Activated CD4-positive, alpha-beta T cell treated with anti-CD3 and anti-CD28 coated beads for 36 hours (primary cell): ENCODE measurements at regions of chr1 and their contacts with region 1.

Region 1: DNA sequence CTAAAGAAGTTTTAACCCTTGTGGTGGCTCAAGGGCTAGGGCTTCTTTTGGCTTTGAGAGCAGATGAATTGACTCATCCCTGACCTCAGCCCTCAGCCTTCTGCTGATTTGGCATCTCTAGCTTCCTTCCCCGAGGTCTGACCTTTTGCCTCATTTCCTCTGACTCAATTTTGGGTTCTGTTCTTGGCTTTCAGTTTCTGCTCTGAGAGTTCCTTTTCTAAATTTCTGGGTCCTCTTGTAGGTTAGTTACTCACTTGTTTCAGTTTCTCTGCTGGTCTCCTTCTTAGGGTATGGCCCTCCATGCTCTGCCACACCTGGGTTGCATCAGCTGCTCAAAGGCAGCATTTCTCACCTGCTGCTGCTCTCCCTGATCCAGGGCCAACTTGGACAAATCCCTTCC is 19.4 kb downstream of the PDE4B start:
- DNase-seq: peak; percentile 81
- ATAC-seq: peak; percentile 98
- H3K4me3 Mint-ChIP-seq: peak overlapping the region; percentile 11
- H3K27ac Mint-ChIP-seq: peak overlapping the region; percentile 74
- H3K4me1 Mint-ChIP-seq: peaks cover 24% of the 10 kb centered on the region
- H3K27me3 Mint-ChIP-seq: peaks cover 36% of the 10 kb centered on the region

Region 2: DNA sequence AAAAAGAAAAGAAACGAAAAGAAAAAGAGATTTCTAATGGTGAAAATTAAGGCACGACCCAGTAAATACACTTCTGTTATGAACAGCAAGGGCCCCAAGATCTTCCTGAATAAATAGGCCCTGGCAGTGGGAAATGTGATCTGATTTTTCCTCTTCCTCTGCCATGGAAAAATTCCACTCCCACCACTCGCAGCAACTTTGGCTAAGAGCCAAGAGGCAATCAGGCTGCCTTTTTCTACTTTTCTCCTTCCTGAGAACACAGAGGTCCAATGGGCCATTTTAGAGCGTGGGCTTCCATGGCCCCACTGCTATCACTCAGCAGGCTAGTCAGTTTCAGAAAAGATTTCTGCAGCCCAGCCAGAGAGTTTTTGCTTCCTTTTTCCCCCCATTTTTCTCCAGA is 697.7 kb before region 1 on chr1:
- CTCF ChIA-PET with region 1: no interaction called
- POLR2A ChIA-PET with region 1: no interaction called
- intact Hi-C with region 1: no loop called
- DNase-seq: no peak
- ATAC-seq: no peak
- H3K4me3 Mint-ChIP-seq: no peak overlapping the region
- H3K27ac Mint-ChIP-seq: no peak overlapping the region
- H3K4me1 Mint-ChIP-seq: no peaks in the 10 kb centered on the region
- H3K27me3 Mint-ChIP-seq: peaks cover 3% of the 10 kb centered on the region

Region 3: GRCh38 chr1:65148548-65149350 is 663.3 kb before region 1 on chr1:
- CTCF ChIA-PET with region 1: no interaction called
- POLR2A ChIA-PET with region 1: no interaction called
- intact Hi-C with region 1: loop called in 1 of 2 experiments (anchors 5 kb)
- DNase-seq: peak; percentile 88
- ATAC-seq: peak; percentile 78
- H3K4me3 Mint-ChIP-seq: peak overlapping the region; percentile 85
- H3K27ac Mint-ChIP-seq: peak overlapping the region; percentile 82
- H3K4me1 Mint-ChIP-seq: peaks cover 15% of the 10 kb centered on the region
- H3K27me3 Mint-ChIP-seq: peaks cover 43% of the 10 kb centered on the region

Region 4: DNA sequence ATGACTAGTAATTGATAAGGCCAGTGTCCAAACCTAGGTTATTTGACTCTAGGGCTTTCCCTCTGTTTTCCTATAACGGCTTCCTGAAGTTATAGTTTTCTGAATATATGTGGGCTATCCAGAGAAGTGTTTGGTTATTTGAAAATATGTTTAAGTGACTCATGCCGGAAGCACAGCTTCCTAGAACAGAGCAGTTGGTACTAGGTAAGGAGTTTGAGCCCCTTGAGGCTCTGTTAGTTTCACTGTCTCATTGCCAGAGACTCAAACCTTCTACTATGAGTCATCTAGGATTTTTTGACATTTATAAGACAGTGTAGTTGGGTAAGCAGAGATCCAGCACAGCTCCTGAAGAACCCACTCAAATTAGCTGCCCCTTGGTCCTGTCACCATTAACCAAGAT is 418.7 kb before region 1 on chr1:
- CTCF ChIA-PET with region 1: no interaction called
- POLR2A ChIA-PET with region 1: no interaction called
- intact Hi-C with region 1: loop called (anchors 2 to 5 kb)
- DNase-seq: peak; percentile 45
- ATAC-seq: peak; percentile 87
- H3K4me3 Mint-ChIP-seq: no peak overlapping the region
- H3K27ac Mint-ChIP-seq: peak overlapping the region; percentile 28
- H3K4me1 Mint-ChIP-seq: peaks cover 57% of the 10 kb centered on the region
- H3K27me3 Mint-ChIP-seq: no peaks in the 10 kb centered on the region

Region 5: DNA sequence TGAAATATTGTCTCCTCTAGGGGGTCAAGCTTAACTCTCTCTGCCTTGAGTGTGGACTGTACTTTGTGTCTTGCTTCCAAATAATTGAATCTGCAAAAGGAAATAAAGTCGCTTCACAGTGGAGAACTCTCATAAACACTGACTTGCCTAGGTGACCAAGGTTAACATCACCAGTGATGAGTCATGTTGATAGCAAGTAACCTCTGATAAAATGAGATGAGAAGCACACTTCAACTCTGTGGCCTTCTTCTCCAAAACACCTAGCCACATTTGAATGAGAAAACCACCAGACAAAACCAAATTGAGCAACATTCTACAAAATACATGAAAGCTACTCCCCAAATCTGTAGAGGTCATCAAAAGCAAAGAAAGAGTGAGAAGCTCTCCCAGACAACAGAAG is 18.2 kb after region 1 on chr1:
- CTCF ChIA-PET with region 1: interaction called, 4 read pairs
- POLR2A ChIA-PET with region 1: no interaction called
- intact Hi-C with region 1: loop called in 1 of 2 experiments (anchors 1 kb)
- DNase-seq: no peak
- ATAC-seq: peak; percentile 82
- H3K4me3 Mint-ChIP-seq: no peak overlapping the region
- H3K27ac Mint-ChIP-seq: no peak overlapping the region
- H3K4me1 Mint-ChIP-seq: peaks cover 4% of the 10 kb centered on the region
- H3K27me3 Mint-ChIP-seq: peaks cover 24% of the 10 kb centered on the region

Region 6: DNA sequence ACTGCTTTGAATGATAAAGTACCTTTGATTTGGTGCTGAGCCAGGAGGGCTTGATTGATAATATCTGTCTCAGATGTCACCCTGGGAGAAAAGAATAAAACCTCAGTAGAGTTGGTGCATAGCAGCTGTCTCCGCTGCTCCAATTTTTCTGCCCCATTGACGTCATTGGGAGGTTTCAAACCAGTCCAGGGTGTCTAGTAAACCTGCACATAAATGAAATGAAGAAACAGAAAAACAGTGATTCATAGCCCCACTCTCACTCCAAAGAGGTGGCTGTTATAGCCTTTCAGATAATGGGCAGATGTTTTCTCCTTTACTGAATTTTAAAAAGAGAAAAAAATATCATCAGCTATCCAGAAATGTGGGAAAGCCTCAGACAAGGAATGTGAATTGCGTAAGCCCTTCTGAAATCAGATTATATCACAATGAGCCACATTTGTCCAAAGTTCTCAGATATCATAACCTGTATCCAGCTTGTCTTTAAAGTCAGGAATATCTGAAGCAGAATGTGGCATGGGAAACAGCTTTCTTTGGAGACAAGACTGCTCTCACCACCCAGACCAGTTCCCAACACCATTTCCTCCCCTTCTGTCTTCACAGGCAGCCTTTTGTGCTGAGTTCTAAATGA is 370.6 kb after region 1 on chr1:
- CTCF ChIA-PET with region 1: no interaction called
- POLR2A ChIA-PET with region 1: no interaction called
- intact Hi-C with region 1: loop called in 1 of 2 experiments (anchors 1 kb)
- DNase-seq: peak; percentile 71
- ATAC-seq: peak; percentile 98
- H3K4me3 Mint-ChIP-seq: no peak overlapping the region
- H3K27ac Mint-ChIP-seq: no peak overlapping the region
- H3K4me1 Mint-ChIP-seq: peaks cover 32% of the 10 kb centered on the region
- H3K27me3 Mint-ChIP-seq: peaks cover 3% of the 10 kb centered on the region

Region 7: DNA sequence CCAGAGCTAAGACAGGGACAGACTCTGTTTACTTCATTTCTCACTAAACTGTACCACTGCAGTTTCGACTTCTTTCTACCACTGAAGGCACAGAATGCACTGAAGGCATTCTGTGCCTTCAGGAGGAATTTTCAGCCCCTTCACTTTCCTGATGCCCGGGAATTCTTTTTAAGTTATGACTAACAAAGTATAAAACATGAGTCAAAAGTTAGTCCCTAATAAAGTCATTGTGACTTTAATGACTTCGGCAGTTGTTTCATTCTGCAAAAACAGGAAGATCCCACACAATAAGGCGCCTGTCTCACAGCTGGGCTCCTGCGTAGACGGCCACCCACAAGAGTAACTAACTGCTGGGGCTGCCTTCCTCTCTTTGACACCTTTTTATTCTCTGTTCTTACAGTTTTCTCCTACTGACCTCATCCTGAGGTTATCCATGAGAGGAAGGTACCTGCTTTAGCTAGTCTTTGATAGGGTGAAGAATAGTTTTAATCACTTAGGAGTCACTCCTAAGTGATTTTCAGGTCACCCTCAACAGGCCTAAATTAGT is 538.0 kb after region 1 on chr1:
- CTCF ChIA-PET with region 1: interaction called, 3 read pairs
- POLR2A ChIA-PET with region 1: no interaction called
- intact Hi-C with region 1: loop called in 1 of 2 experiments (anchors 5 kb)
- DNase-seq: peak; percentile 78
- ATAC-seq: peak; percentile 59
- H3K4me3 Mint-ChIP-seq: peak overlapping the region; percentile 57
- H3K27ac Mint-ChIP-seq: peak overlapping the region; percentile 88
- H3K4me1 Mint-ChIP-seq: peaks cover 93% of the 10 kb centered on the region
- H3K27me3 Mint-ChIP-seq: no peaks in the 10 kb centered on the region